ENCODE measurements at regions of chr12 and their contacts with region 1.

Region 1: DNA sequence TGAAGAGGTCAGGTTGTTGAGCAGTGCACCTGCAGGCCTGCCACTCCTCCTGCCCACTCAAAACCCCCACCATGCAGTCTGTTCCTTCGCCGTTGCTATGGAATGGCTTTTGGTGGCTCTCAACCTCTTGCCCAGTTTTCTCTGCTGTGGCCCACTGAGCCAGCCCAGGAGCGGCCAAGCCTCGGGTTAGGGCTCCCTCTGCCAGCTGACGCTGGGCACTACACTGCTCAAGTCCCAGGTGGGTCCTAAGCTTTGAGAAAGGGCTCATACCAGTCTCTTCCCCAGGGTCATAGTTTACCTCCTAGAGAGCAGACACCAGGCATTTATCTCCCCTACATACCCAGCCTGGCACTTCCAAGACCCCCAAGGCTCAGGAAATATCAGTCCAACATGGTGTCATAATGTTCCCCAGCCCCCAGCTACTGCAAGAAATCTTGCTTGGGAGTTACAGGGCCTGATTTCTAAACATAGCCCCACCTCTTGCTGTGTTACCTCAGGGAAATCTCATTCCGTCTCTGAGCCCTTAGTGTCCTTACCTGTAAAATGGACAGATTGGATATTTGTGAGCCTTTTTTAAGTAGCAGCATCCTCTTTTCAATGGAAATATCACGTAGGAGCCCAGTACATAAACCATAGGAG is 59.4 kb downstream of the TSPAN11 start:
- DNase-seq: peak; percentile 75
- CTCF ChIP-seq: peak; percentile 76

Region 2: DNA sequence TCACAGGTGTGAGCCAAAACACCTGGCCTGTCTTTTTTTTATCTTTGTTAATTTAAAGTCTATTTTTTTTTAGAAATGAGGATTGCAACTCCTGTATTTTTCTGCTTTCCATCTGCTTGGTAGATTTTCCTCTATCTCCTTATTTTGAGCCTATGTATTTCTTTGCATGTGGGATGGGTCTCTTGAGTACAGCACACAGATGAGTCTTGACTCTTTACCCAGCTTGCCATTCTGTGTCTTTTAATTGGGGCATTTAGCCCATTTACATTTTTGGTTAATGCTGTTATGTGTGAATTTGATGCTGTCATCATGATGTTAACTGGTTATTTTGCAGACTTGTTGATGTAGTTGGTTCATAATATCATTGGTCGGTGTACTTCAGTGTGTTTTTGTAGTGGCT is 607.6 kb before region 1 on chr12:
- CTCF ChIA-PET with region 1: no interaction called
- POLR2A ChIA-PET with region 1: no interaction called
- DNase-seq: no peak
- CTCF ChIP-seq: no peak

Region 3: DNA sequence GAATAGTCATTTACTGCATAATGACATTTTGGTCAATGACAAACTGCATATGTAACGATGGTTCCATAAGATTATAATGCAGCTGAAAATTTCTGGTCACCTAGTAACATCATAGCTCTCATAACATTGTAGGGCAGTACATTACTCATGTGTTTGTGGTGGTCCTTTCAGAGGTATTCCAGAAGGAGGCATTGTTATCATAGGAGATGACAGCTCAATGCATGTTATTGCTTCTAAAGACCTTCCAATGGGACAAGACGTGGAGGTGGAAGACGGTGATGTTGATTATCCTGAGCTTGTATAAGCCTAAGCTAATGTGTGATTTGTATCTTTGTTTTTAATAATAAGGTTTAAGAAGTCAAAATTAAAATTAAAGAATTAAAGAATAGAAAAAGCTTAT is 103.2 kb before region 1 on chr12:
- CTCF ChIA-PET with region 1: interaction called, 25 read pairs
- POLR2A ChIA-PET with region 1: no interaction called
- DNase-seq: no peak
- CTCF ChIP-seq: no peak

Region 4: DNA sequence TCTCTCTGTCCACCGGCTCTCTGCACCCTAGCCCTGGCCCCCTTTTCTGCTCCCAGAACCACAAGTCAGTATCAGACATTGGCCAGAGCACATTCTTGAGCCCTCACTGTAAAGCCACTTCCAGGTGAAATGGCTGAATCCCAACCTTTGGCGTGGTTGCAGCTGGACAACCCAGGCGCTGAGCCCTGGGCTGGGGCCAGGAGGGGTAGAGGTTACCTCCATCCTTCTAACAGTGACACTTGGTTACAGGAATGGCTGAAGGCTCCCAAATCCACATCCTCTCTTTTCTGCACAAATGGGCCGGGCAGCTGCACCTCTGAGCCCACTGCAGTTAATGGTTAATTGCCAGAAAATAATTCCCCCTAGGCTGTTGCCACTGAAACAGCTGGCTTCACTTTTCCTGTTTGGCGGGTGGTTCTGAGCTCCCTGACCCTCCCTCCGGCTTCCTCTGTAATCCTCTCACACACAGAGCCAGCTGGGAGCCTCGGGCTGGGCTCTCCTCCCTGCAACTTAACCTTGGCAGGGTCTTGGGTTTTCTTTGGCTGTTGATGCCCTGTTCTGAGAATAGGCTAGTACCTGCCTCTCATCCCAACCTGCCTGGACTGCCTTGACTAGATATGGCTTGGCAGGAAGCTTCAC is 15.3 kb before region 1 on chr12:
- CTCF ChIA-PET with region 1: interaction called, 32 read pairs
- POLR2A ChIA-PET with region 1: no interaction called
- DNase-seq: no peak
- CTCF ChIP-seq: no peak

Region 5: GRCh38 chr12:31000751-31001150 is 14.8 kb after region 1 on chr12:
- CTCF ChIA-PET with region 1: interaction called, 10 read pairs
- POLR2A ChIA-PET with region 1: interaction called, 3 read pairs
- DNase-seq: no peak
- CTCF ChIP-seq: no peak